ENCODE measurements at regions of chr1 and their contacts with region 1.

Region 1: DNA sequence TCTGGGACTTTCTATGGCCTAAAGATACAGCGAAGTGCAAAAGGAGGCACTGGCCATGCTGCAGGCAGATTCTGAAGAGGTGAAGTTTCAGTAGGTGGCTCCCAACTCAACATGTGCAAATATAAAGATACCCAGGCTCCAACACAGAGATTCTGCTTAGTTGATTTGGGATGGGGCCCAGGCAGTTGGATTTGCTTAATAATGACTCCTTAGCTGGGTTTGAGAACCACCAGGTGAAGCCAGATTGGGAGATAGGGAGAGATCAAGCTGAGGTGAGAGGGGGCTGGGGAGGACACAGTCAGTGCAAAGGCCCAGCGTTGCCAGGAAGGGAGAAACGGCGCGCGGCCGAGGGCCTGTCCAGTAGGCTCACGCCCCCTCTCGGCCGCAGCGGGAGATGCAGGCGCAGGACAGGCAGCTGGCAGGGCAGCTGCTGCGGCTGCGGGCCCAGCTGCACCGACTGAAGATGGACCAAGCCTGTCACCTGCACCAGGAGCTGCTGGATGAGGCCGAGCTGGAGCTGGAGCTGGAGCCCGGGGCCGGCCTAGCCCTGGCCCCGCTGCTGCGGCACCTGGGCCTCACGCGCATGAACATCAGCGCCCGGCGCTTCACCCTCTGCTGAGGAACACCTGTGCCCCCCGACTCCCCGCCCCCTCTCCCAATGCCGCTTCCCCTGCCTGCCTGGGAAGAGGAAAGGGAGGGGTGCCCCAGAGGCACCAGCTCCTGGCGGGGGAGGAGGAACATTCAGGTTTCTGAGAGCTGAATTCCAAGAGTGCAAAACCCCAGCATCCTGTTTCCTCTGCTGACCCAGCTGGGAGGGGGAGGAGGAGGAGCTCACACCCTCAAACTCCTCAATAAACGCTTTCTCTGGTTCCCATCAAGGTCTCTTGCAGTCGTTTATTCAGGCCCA is 1.2 kb downstream of the FAM167B start:
- DNase-seq: peak; percentile 56 to 86 (median 66)
- ATAC-seq: no peak
- H3K4me3 ChIP-seq: peak overlapping the region; percentile 41
- H3K4me3 Mint-ChIP-seq: peak overlapping the region; percentile 86
- H3K27ac ChIP-seq: peak overlapping the region; percentile 87 to 94
- H3K27ac Mint-ChIP-seq: peak overlapping the region; percentile 99
- H3K4me1 ChIP-seq: peaks cover 65% of the 10 kb centered on the region
- H3K4me1 Mint-ChIP-seq: peaks cover 58% of the 10 kb centered on the region
- H3K27me3 ChIP-seq: no peaks in the 10 kb centered on the region
- H3K27me3 Mint-ChIP-seq: no peaks in the 10 kb centered on the region
- CTCF ChIP-seq: peak; percentile 92

Region 2: DNA sequence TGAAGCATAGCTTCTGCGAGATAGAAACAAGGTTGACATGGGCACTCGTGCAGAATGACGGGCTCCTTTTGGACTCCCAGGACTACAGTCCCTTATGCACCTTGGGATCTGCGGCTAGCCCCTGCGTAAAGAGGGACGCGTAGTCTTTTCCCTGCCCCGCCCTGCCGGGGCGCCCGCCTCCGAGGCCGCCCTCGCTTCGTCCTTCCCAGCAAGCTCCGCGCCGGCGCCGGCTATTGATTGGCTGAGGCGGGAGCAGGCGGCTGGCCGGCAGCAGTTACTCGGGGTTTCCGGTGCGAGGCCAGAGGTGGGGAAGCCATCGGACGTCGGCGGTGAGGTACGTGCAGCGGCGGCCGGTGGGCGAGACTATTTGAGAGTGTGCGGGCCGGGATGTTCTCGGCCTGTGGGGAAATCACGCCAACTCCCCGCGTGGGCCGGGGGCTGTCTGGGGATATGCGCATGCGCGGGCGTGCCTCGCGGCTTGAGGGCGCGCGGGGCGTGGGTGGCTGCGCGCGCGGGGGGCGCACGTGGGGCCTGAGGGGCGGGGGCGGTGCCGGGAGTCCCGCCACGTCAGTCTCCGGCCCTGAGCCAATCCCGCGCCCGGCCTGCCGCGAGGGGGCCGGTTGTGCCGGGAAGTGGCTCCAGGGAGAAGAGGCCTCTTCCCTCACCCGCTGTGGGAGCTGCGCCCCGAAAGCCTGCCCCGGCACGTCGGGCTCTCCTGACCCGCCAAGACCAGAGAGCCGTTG is 68.6 kb before region 1 on chr1 and contains the start of gene TXLNA:
- CTCF ChIA-PET with region 1: interaction called, 4 read pairs
- POLR2A ChIA-PET with region 1: interaction called, 12 read pairs
- intact Hi-C with region 1: no loop called
- DNase-seq: peak; percentile 77 to 94 (median 84)
- ATAC-seq: peak; percentile 85
- H3K4me3 ChIP-seq: peak within 1 kb of the TSS; percentile 90
- H3K4me3 Mint-ChIP-seq: peak within 1 kb of the TSS; percentile 91
- H3K27ac ChIP-seq: peak within 1 kb of the TSS; percentile 77 to 93
- H3K27ac Mint-ChIP-seq: peak within 1 kb of the TSS; percentile 93
- H3K4me1 ChIP-seq: peaks cover 46% of the 10 kb centered on the region
- H3K4me1 Mint-ChIP-seq: peaks cover 49% of the 10 kb centered on the region
- H3K27me3 ChIP-seq: no peaks in the 10 kb centered on the region
- H3K27me3 Mint-ChIP-seq: no peaks in the 10 kb centered on the region
- CTCF ChIP-seq: no peak
- total RNA-seq, gene TXLNA: 6.3 to 6.4 TPM

Region 3: GRCh38 chr1:32205401-32206370 is 42.5 kb before region 1 on chr1 and contains the start of gene IQCC:
- CTCF ChIA-PET with region 1: interaction called, 4 read pairs
- POLR2A ChIA-PET with region 1: interaction called, 27 read pairs
- intact Hi-C with region 1: loop called in 1 of 2 experiments (anchors 2 kb)
- DNase-seq: peak; percentile 72 to 95 (median 81)
- ATAC-seq: peak; percentile 59
- H3K4me3 ChIP-seq: peak within 1 kb of the TSS; percentile 90
- H3K4me3 Mint-ChIP-seq: peak within 1 kb of the TSS; percentile 91
- H3K27ac ChIP-seq: peak within 1 kb of the TSS; percentile 33 to 49
- H3K27ac Mint-ChIP-seq: peak within 1 kb of the TSS; percentile 87
- H3K4me1 ChIP-seq: peaks cover 55% of the 10 kb centered on the region
- H3K4me1 Mint-ChIP-seq: peaks cover 38% of the 10 kb centered on the region
- H3K27me3 ChIP-seq: no peaks in the 10 kb centered on the region
- H3K27me3 Mint-ChIP-seq: no peaks in the 10 kb centered on the region
- CTCF ChIP-seq: no peak
- total RNA-seq, gene IQCC: 2.4 to 3.2 TPM

Region 4: DNA sequence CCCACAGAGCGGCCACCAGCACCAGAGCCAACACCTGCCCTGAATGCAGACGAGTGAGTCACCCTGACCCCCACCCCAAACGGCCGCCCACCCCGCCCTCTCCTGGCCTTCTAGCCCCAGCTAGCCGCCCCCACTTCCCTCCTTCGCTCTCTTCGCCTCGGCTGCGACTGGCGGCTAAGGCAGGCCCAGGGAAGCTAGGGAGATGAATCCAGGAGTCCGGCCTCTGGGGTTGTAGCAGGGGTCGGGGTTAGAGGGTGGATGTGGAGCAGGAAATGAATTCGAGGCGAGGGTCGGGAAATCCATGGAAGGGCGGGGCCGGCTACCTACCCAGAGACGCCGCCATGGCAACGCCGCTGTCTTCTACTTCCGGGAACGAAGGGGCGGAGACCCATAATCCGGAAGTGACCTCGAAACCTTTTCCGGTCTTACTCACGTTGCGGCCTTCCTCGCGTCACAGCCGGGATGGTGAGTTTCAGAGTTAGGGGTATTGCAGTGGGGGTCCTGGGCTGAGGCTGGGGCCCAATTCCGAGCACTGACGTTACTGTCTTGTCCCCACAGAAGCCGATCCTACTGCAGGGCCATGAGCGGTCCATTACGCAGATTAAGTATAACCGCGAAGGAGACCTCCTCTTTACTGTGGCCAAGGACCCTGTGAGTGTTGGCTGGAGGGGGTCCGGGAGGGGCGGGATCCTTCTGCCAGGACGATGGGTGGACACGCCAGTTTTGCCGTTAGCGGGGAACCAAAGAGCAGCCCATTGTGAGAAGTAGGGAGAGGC is 26.1 kb before region 1 on chr1 and contains the starts of genes EIF3I and TMEM234:
- CTCF ChIA-PET with region 1: interaction called, 21 read pairs
- POLR2A ChIA-PET with region 1: interaction called, 9 read pairs
- intact Hi-C with region 1: loop called in 1 of 2 experiments (anchors 2 kb)
- DNase-seq: peak; percentile 81 to 96 (median 88)
- ATAC-seq: peak; percentile 89
- H3K4me3 ChIP-seq: peak within 1 kb of the TSS; percentile 79
- H3K4me3 Mint-ChIP-seq: peak within 1 kb of the TSS; percentile 99
- H3K27ac ChIP-seq: peak within 1 kb of the TSS; percentile 94
- H3K27ac Mint-ChIP-seq: peak within 1 kb of the TSS; percentile 99
- H3K4me1 ChIP-seq: peaks cover 34% of the 10 kb centered on the region
- H3K4me1 Mint-ChIP-seq: peaks cover 38% of the 10 kb centered on the region
- H3K27me3 ChIP-seq: no peaks in the 10 kb centered on the region
- H3K27me3 Mint-ChIP-seq: no peaks in the 10 kb centered on the region
- CTCF ChIP-seq: no peak
- total RNA-seq, gene EIF3I: 103 to 110 TPM
- total RNA-seq, gene TMEM234: 11.5 to 12.8 TPM

Region 5: DNA sequence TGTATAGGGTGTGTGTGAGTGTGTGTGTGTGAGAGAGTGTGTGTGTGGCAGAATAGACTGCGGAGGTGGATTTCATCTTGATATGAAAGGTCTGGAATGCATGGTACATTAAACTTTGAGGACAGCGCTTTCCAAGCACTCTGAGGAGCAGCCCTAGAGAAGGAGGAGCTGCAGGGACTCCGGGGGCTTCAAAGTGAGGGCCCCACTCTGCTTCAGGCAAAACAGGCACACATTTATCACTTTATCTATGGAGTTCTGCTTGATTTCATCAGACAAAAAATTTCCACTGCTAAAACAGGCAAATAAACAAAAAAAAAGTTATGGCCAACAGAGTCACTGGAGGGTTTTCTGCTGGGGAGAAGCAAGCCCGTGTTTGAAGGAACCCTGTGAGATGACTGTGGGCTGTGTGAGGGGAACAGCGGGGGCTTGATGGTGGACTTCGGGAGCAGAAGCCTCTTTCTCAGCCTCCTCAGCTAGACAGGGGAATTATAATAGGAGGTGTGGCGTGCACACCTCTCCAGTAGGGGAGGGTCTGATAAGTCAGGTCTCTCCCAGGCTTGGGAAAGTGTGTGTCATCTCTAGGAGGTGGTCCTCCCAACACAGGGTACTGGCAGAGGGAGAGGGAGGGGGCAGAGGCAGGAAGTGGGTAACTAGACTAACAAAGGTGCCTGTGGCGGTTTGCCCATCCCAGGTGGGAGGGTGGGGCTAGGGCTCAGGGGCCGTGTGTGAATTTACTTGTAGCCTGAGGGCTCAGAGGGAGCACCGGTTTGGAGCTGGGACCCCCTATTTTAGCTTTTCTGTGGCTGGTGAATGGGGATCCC is 25.4 kb after region 1 on chr1:
- CTCF ChIA-PET with region 1: interaction called, 6 read pairs
- POLR2A ChIA-PET with region 1: interaction called, 543 read pairs
- intact Hi-C with region 1: loop called (anchors 1 to 2 kb)
- DNase-seq: peak; percentile 51 to 92 (median 84)
- ATAC-seq: peak; percentile 89
- H3K4me3 ChIP-seq: peak overlapping the region; percentile 44
- H3K4me3 Mint-ChIP-seq: peak overlapping the region; percentile 87
- H3K27ac ChIP-seq: peak overlapping the region; percentile 60 to 78
- H3K27ac Mint-ChIP-seq: peak overlapping the region; percentile 93
- H3K4me1 ChIP-seq: peaks cover 76% of the 10 kb centered on the region
- H3K4me1 Mint-ChIP-seq: peaks cover 56% of the 10 kb centered on the region
- H3K27me3 ChIP-seq: no peaks in the 10 kb centered on the region
- H3K27me3 Mint-ChIP-seq: no peaks in the 10 kb centered on the region
- CTCF ChIP-seq: no peak

Region 6: GRCh38 chr1:32321712-32322291 is 73.6 kb after region 1 on chr1:
- CTCF ChIA-PET with region 1: interaction called, 8 read pairs
- POLR2A ChIA-PET with region 1: interaction called, 32 read pairs
- intact Hi-C with region 1: no loop called
- DNase-seq: peak in 10 of 14 experiments; percentile 7 to 70 (median 29)
- ATAC-seq: peak; percentile 87
- H3K4me3 ChIP-seq: peak overlapping the region; percentile 25
- H3K4me3 Mint-ChIP-seq: peak overlapping the region; percentile 62
- H3K27ac ChIP-seq: peak overlapping the region; percentile 12 to 49
- H3K27ac Mint-ChIP-seq: peak overlapping the region; percentile 82
- H3K4me1 ChIP-seq: peaks cover 62% of the 10 kb centered on the region
- H3K4me1 Mint-ChIP-seq: peaks cover 51% of the 10 kb centered on the region
- H3K27me3 ChIP-seq: no peaks in the 10 kb centered on the region
- H3K27me3 Mint-ChIP-seq: no peaks in the 10 kb centered on the region
- CTCF ChIP-seq: no peak

Region 7: GRCh38 chr1:33036526-33037503 is 788.6 kb after region 1 on chr1 and contains the start of gene AK2:
- CTCF ChIA-PET with region 1: no interaction called
- POLR2A ChIA-PET with region 1: no interaction called
- intact Hi-C with region 1: no loop called
- DNase-seq: peak; percentile 71 to 95 (median 86)
- ATAC-seq: peak; percentile 99
- H3K4me3 ChIP-seq: peak within 1 kb of the TSS; percentile 93
- H3K4me3 Mint-ChIP-seq: peak within 1 kb of the TSS; percentile 98
- H3K27ac ChIP-seq: peak within 1 kb of the TSS in 1 of 2 donors; percentile 67
- H3K27ac Mint-ChIP-seq: peak within 1 kb of the TSS; percentile 34
- H3K4me1 ChIP-seq: peaks cover 35% of the 10 kb centered on the region
- H3K4me1 Mint-ChIP-seq: peaks cover 48% of the 10 kb centered on the region
- H3K27me3 ChIP-seq: no peaks in the 10 kb centered on the region
- H3K27me3 Mint-ChIP-seq: no peaks in the 10 kb centered on the region
- CTCF ChIP-seq: no peak
- total RNA-seq, gene AK2: 25.6 to 30.4 TPM